ENCODE measurements at regions of chr2 and their contacts with region 1.

Region 1: GRCh38 chr2:197339496-197340220 is 29.1 kb upstream of the ANKRD44 start:
- DNase-seq: no peak
- H3K4me3 ChIP-seq: no peak overlapping the region
- H3K27ac ChIP-seq: no peak overlapping the region
- H3K4me1 ChIP-seq: no peaks in the 10 kb centered on the region
- H3K27me3 ChIP-seq: no peaks in the 10 kb centered on the region
- CTCF ChIP-seq: no peak

Region 2: DNA sequence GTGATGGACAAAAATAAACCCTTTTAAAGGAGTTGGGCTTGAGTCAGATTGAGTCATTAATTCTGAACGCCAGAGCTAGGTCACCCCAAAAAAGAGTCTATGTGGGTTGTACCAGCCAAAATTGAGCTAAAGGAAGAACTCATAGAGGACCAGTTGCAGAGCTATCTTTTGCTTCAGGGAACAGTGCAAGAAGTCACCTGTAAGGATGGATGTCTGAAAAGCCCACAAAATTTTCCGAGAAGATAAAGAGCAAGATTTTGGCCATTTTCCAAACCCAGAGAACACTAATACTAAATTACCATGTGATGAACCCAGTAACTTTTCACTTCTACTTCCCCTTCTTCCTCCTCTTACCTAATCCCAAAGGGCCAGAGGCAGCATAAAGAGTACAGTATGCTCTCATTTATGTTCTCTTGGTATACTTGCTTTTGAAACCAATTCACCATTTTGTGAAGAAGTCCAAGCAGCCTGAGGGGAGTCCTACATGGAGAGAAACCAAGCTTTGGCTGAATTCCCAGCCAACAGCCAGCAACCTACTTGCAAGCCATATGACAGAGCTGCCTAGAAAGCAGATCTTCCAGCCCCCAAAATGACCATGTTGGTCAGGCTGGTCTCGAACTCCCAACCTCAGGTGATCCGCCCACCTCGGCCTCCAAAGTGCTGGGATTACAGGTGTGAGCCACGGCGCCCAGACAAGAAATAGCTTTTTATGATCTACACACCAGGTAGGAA is 1566.4 kb after region 1 on chr2:
- CTCF ChIA-PET with region 1: interaction called, 12 read pairs
- POLR2A ChIA-PET with region 1: no interaction called
- intact Hi-C with region 1: no loop called
- DNase-seq: no peak
- H3K4me3 ChIP-seq: no peak overlapping the region
- H3K27ac ChIP-seq: no peak overlapping the region
- H3K4me1 ChIP-seq: no peaks in the 10 kb centered on the region
- H3K27me3 ChIP-seq: no peaks in the 10 kb centered on the region
- CTCF ChIP-seq: no peak